Ascending aorta (tissue), 2 donors: ENCODE measurements at regions of chr12 and their contacts with region 1.

Region 1: DNA sequence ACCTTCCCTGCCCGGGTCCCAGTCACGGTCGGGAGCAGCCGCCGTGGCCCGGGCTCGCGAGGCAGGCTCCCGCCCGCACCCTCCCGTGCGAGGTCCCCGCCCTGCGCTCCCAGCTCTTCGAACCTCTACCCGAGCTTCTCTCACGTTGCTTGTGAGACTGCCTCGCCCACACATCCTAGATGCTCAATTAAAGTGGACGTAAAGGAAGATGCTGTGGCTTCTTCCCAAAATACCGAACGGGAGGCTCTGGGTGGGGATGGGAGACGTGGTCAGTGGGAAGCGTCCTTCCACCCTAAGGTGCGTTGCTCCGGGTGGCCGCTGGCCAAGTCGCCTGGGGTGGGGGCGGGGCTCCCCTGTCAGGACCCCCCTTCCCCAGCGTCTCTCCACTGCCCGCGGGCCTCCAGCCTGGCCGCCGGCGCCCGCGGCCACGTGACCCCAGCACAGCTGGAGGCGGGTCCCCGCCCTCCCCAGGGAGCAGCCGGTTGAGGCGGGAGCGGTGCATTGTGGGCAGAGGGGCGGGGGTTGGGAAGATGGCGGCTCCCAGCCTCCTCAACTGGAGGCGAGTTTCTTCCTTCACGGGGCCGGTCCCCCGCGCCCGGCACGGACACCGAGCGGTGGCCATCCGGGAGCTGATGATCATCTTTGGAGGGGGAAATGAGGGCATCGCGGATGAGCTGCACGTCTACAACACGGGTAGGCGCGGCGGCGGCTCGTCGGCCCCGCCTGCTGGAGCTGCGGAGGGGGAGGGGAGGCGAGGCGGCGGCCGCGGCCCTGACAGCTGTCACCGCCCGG is at the start of gene HCFC2:
- DNase-seq: peak; percentile 63 to 94
- H3K4me3 ChIP-seq: peak within 1 kb of the TSS; percentile 74 to 81
- H3K27ac ChIP-seq: peak within 1 kb of the TSS; percentile 81 to 92
- H3K4me1 ChIP-seq: peaks cover 0 to 9% of the 10 kb centered on the region in 2 donors
- H3K27me3 ChIP-seq: no peaks in the 10 kb centered on the region
- CTCF ChIP-seq: no peak
- total RNA-seq, gene HCFC2: 9.8 TPM

Region 2: GRCh38 chr12:103944964-103945363 is 119.3 kb before region 1 on chr12:
- intact Hi-C with region 1: no loop called
- DNase-seq: no peak
- H3K4me3 ChIP-seq: no peak overlapping the region
- H3K27ac ChIP-seq: no peak overlapping the region
- H3K4me1 ChIP-seq: no peaks in the 10 kb centered on the region
- H3K27me3 ChIP-seq: no peaks in the 10 kb centered on the region
- CTCF ChIP-seq: no peak

Region 3: DNA sequence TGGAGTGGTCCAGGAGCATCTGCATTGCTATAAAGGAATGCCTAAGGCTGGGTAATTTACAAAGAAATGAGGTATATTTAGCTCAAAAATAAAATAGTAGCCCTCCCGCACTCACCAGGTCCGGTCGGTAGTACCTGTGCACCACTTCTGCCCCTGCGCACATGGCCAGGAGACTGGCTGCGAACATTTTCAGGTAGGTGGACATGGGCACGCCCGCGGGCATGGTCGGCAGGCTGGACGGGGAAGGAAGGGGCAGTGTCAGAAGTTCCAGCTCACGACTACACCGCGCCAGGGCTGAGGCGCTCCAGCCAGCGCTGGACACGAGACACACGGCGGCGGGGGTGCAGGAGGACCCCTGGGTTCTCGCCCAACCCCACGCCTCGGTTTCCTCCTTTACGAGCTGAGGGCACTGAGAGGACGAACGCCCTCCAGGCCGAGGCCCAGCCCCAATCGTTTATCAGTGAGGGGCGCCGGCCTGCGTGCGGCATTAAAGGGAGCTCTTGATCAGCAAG is 107.7 kb before region 1 on chr12:
- intact Hi-C with region 1: loop called (anchors 2 kb)
- DNase-seq: no peak
- H3K4me3 ChIP-seq: peak overlapping the region; percentile 87 to 93
- H3K27ac ChIP-seq: peak overlapping the region; percentile 84 to 85
- H3K4me1 ChIP-seq: peaks cover 0 to 19% of the 10 kb centered on the region in 2 donors
- H3K27me3 ChIP-seq: no peaks in the 10 kb centered on the region
- CTCF ChIP-seq: no peak

Region 4: DNA sequence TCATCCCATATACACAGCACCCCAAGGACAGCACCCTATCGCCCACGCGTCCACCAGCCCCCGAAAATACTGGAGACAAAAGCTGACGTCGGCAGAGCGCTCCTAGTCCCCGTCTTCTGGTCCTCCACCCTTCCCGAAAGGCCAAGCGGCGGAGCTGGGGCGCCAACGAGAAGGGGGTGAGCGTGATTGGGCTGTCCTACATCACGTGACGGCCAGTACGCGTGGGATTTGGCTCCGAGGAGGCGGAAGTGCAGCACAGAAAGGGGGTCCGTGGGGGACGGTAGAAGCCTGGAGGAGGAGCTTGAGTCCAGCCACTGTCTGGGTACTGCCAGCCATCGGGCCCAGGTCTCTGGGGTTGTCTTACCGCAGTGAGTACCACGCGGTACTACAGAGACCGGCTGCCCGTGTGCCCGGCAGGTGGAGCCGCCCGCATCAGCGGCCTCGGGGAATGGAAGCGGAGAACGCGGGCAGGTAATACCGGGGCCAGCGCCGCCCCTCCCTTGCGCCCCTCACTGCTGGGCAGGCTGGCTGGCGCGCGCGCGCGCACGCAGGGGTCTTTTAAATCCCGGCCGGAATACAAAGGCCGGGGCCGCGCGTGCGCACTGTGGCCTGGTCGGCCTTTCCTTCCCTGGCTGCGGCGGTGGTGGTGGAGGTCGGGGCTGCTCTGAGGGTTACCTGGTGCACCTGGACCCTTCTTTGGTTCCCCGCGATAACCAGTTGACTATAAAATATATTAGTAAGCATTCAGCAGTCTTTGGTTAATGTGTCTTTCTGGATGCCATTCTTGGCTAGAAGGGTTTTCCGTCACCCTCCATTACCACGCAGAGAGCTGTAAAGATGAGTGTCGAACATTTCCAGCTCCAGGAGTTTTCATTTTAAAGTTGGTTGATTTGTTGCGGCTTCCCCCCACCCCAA is 98.4 kb before region 1 on chr12 and contains the start of gene TDG:
- intact Hi-C with region 1: loop called (anchors 2 kb)
- DNase-seq: peak; percentile 95 to 99
- H3K4me3 ChIP-seq: peak within 1 kb of the TSS; percentile 77 to 81
- H3K27ac ChIP-seq: peak within 1 kb of the TSS; percentile 93 to 95
- H3K4me1 ChIP-seq: peaks cover 4 to 54% of the 10 kb centered on the region in 2 donors
- H3K27me3 ChIP-seq: no peaks in the 10 kb centered on the region
- CTCF ChIP-seq: peak in 2 of 3 experiments; percentile 15 to 32
- total RNA-seq, gene TDG: 11.8 TPM

Region 5: DNA sequence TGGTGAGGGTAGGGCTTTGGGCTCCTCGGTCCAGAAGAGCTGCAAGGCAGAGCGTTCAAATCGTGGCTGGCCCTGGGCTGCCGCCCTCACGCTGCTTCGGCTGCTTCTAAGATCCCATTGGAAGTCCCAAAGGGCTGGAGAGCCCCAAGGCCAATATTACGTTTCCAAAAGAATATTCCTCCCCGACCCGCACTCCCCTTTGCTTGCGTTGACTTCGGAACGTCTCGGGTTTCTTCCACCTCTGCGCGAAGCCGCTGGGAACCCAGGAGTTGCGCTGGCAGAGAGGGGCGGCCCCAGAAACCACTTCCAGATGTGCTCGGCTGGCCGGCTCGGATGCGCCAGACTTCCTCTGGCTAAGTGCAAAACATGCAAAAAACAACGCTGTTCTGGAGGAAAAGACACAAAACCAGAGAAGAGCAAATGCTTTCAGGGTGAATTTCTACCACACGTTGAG is 14.3 kb before region 1 on chr12 and contains the start of gene GLT8D2:
- intact Hi-C with region 1: loop called (anchors 2 kb)
- DNase-seq: peak in 1 of 2 donors; percentile 78
- H3K4me3 ChIP-seq: peak within 1 kb of the TSS; percentile 57 to 76
- H3K27ac ChIP-seq: peak within 1 kb of the TSS; percentile 77 to 88
- H3K4me1 ChIP-seq: peaks cover 6 to 29% of the 10 kb centered on the region in 2 donors
- H3K27me3 ChIP-seq: no peaks in the 10 kb centered on the region
- CTCF ChIP-seq: no peak
- total RNA-seq, gene GLT8D2: 72.3 TPM

Region 6: DNA sequence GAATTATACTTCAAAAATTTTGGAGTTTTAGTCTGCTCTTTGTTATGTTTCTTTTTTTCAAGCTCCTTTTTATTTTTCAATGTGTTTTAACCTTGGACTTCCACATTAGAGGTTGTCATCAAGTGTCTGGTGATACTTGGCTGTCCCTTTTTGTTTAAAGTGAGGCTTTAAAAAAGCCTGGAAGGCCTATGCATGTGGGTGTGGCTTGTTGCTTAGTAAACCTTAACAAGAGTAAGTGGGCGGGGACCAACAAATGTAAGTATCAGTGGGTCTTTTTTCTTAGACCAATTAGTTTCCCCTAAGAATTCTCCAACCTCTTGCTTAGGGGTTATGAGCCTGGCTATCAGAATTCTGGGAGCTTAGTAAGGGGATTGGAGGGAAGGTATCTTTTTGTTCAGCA is 26.5 kb after region 1 on chr12:
- intact Hi-C with region 1: no loop called
- DNase-seq: no peak
- H3K4me3 ChIP-seq: no peak overlapping the region
- H3K27ac ChIP-seq: no peak overlapping the region
- H3K4me1 ChIP-seq: no peaks in the 10 kb centered on the region
- H3K27me3 ChIP-seq: no peaks in the 10 kb centered on the region
- CTCF ChIP-seq: no peak

Region 7: DNA sequence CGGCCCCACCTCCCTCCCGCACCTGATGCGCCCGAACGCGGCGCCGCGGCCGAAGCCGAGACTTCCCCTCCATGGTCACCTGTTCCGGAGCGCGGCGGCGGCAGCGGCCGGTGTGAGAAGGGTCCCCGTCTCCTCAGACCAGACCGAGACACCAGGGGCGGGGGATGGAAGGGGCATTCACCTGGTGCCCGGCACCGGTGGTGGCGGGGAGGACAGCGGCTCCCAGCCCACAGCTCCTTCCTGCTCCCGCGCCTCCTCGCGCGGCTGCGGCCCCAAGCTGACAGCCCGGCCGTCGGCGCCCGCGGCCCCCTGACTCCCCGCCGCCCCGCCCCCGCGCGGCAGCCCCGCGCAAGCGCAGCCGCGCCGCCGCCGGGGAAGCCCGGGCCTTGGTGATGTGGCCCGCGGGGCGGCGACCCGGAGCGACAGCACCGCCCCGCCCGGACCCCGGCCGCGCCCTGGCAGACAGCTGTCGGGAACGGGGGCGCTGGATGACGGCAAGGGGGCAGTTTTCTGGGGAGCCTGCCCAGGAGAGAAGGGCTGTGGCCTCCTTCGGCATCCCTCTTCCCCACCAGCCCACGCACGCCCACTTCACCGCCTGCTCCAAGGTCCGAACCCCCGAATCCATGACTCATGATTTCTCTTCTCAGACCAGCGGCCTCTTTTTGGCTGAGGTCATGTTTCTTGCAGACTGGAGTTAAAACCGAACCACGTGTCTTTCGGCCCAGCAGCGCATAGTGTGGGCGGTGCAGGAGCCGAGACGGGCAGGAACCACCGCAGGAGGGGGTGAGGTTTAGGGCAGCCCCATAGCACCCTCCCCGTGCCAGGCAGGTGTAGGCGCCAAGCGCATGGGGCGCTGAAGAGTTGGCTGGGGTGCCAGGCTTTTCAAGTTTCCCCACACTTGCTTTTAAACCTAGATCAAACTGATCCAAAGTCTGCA is 894.0 kb after region 1 on chr12 and contains the start of gene SLC41A2:
- intact Hi-C with region 1: no loop called
- DNase-seq: peak; percentile 83 to 94
- H3K4me3 ChIP-seq: peak within 1 kb of the TSS; percentile 69 to 88
- H3K27ac ChIP-seq: peak within 1 kb of the TSS; percentile 92 to 96
- H3K4me1 ChIP-seq: peaks cover 0 to 18% of the 10 kb centered on the region in 2 donors
- H3K27me3 ChIP-seq: no peaks in the 10 kb centered on the region
- CTCF ChIP-seq: peak in 2 of 3 experiments; percentile 11 to 57
- total RNA-seq, gene SLC41A2: 15.6 TPM